MCF 10A (cell line): ENCODE measurements at regions of chr17 and their contacts with region 1.

Region 1: GRCh38 chr17:67421869-67422273 is 44.8 kb downstream of the PITPNC1 start:
- DNase-seq: peak; percentile 99
- H3K4me3 Mint-ChIP-seq: peak overlapping the region; percentile 29
- H3K27ac Mint-ChIP-seq: peak overlapping the region; percentile 86
- H3K4me1 Mint-ChIP-seq: peaks cover 35% of the 10 kb centered on the region
- H3K27me3 Mint-ChIP-seq: no peaks in the 10 kb centered on the region
- CTCF ChIP-seq: no peak

Region 2: GRCh38 chr17:67229109-67229955 is 192.5 kb before region 1 on chr17:
- CTCF ChIA-PET with region 1: no interaction called
- POLR2A ChIA-PET with region 1: no interaction called
- intact Hi-C with region 1: no loop called
- DNase-seq: no peak
- H3K4me3 Mint-ChIP-seq: no peak overlapping the region
- H3K27ac Mint-ChIP-seq: peak overlapping the region; percentile 12
- H3K4me1 Mint-ChIP-seq: peaks cover 8% of the 10 kb centered on the region
- H3K27me3 Mint-ChIP-seq: no peaks in the 10 kb centered on the region
- CTCF ChIP-seq: no peak

Region 3: DNA sequence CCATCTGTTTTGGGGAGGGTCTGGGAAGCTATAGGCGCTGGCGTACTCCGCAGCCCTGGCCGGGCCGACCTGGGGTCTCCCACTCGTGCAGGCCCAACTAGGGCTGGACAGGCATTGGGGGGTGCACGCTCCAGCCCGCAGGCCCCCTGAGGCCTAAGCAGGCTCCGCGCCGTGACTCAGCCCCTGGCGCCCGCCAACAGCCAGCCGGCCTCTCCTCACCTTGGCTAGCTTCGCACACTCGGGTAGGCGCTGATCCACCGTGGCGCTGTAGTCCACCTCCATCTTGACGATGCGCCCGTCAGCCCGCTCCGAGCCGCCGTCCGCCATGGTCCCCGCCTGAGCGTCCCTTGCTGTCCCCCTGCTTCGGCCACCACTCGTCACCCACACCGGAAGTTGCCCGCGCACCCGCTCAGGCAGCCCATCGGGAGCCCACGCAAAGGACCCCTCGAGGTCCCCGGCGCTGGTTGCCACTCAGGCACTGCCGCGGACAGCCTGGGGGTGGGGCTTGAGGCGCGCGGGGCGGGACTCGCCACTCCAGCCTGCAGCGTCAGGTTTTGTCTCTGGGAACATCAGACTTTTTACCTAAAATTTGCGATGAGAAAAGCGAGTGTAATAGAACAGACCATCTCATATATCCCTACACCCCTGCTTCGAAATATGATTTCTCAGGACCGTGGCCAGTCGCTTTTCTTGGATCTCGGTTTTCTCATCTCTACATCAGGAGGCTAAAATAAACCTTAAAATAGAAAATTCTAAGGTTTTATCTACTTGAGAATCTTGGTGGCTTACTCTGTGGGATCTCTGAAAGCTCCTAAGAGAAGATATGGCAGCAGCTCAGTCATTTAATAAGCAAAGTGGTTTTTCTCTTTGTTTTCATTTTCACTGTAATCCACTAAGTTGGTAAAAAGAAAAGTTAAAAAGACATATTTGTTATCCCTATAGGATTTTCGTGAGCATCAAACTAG is 55.4 kb before region 1 on chr17 and contains the start of gene PSMD12:
- CTCF ChIA-PET with region 1: no interaction called
- POLR2A ChIA-PET with region 1: interaction called, 19 read pairs
- intact Hi-C with region 1: no loop called
- DNase-seq: peak; percentile 90
- H3K4me3 Mint-ChIP-seq: peak within 1 kb of the TSS; percentile 90
- H3K27ac Mint-ChIP-seq: peak within 1 kb of the TSS; percentile 74
- H3K4me1 Mint-ChIP-seq: peaks cover 18% of the 10 kb centered on the region
- H3K27me3 Mint-ChIP-seq: no peaks in the 10 kb centered on the region
- CTCF ChIP-seq: no peak
- total RNA-seq, gene PSMD12: 93.1 and 107 TPM in 2 replicates